ENCODE measurements at regions of chr7 and their contacts with region 1.

Region 1: GRCh38 chr7:54339073-54339472 is 203.1 kb upstream of the VSTM2A start:
- DNase-seq: no peak
- ATAC-seq: no peak
- H3K4me3 ChIP-seq: no peak overlapping the region
- H3K27ac ChIP-seq: no peak overlapping the region
- H3K4me1 ChIP-seq: no peaks in the 10 kb centered on the region
- H3K27me3 ChIP-seq: no peaks in the 10 kb centered on the region
- CTCF ChIP-seq: no peak
- EP300 ChIP-seq: no peak
- POLR2A ChIP-seq: no peak
- RAD21 ChIP-seq: no peak

Region 2: DNA sequence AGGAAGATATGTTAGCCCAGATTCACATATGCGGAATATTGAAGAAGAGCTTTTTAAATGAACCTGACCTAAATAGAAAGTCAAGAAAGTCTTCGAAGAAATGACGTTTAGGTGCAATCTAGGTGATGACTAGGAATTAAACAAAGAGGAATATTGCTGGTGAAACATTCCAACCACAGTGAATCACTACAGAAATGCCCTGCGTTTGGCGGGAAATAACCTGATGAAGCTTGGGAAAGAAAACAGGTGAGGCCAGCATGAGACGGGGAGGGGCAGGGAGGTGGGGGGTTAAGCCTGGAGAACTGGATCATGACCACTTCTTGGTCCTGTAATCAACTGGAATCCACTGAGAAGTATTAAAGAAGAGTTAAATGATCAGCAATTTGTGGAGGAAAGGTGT is 96.3 kb before region 1 on chr7:
- CTCF ChIA-PET with region 1: no interaction called
- POLR2A ChIA-PET with region 1: no interaction called
- RAD21 ChIA-PET with region 1: no interaction called
- SMC1A ChIA-PET with region 1: no interaction called
- in situ Hi-C with region 1: loop called (anchors 10 kb)
- intact Hi-C with region 1: no loop called
- DNase-seq: no peak
- ATAC-seq: no peak
- H3K4me3 ChIP-seq: no peak overlapping the region
- H3K27ac ChIP-seq: no peak overlapping the region
- H3K4me1 ChIP-seq: no peaks in the 10 kb centered on the region
- H3K27me3 ChIP-seq: no peaks in the 10 kb centered on the region
- CTCF ChIP-seq: no peak
- EP300 ChIP-seq: no peak
- POLR2A ChIP-seq: no peak
- RAD21 ChIP-seq: no peak

Region 3: DNA sequence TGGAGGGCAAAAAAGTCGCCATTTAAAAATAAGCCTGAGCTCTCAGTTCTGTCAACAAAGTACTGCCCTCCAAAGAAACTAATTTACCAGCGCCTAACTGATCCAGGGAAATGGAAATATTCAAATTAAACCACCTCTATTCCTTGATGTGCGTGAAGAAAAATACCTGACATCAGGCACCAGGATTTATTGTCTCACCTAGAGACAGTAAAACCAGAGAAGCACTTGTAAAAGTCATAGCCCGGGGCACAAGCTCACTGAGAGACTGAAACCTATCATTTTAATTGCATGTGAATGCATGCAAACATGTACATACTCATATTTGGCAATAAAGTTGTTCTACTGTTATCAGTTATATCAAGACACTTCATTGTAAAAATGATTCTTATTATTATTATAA is 55.8 kb after region 1 on chr7:
- CTCF ChIA-PET with region 1: interaction called, 6 read pairs
- POLR2A ChIA-PET with region 1: interaction called, 3 read pairs
- RAD21 ChIA-PET with region 1: interaction called, 26 read pairs
- SMC1A ChIA-PET with region 1: interaction called, 10 read pairs
- in situ Hi-C with region 1: no loop called
- intact Hi-C with region 1: loop called (anchors 5 kb)
- DNase-seq: no peak
- ATAC-seq: peak; percentile 55
- H3K4me3 ChIP-seq: no peak overlapping the region
- H3K27ac ChIP-seq: no peak overlapping the region
- H3K4me1 ChIP-seq: no peaks in the 10 kb centered on the region
- H3K27me3 ChIP-seq: no peaks in the 10 kb centered on the region
- CTCF ChIP-seq: no peak
- EP300 ChIP-seq: no peak
- POLR2A ChIP-seq: no peak
- RAD21 ChIP-seq: no peak

Region 4: DNA sequence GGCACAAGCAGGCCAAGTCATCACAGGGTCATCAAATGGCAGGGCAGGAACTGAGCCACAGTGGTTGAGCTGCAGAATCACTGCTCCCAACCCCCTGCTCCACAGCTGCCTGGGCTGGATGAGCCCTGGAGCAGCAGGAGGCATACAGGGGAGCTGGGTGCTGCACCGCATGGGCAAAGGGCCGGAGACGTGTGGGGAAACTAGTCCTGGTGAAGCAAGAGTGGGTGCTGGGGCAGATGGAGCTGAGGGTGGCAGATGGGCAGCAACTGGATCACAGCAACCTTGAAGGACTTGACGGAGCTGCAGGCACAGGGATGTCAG is 1249.3 kb after region 1 on chr7:
- CTCF ChIA-PET with region 1: no interaction called
- POLR2A ChIA-PET with region 1: no interaction called
- RAD21 ChIA-PET with region 1: no interaction called
- SMC1A ChIA-PET with region 1: no interaction called
- in situ Hi-C with region 1: no loop called
- intact Hi-C with region 1: no loop called
- DNase-seq: no peak
- ATAC-seq: no peak
- H3K4me3 ChIP-seq: no peak overlapping the region
- H3K27ac ChIP-seq: no peak overlapping the region
- H3K4me1 ChIP-seq: peaks cover 4% of the 10 kb centered on the region; the same call in 1 of the 2 replicates
- H3K27me3 ChIP-seq: no peaks in the 10 kb centered on the region
- CTCF ChIP-seq: no peak
- EP300 ChIP-seq: no peak
- POLR2A ChIP-seq: no peak
- RAD21 ChIP-seq: no peak